CD4-positive, alpha-beta memory T cell (primary cell): ENCODE measurements at regions of chr9 and their contacts with region 1.

Region 1: DNA sequence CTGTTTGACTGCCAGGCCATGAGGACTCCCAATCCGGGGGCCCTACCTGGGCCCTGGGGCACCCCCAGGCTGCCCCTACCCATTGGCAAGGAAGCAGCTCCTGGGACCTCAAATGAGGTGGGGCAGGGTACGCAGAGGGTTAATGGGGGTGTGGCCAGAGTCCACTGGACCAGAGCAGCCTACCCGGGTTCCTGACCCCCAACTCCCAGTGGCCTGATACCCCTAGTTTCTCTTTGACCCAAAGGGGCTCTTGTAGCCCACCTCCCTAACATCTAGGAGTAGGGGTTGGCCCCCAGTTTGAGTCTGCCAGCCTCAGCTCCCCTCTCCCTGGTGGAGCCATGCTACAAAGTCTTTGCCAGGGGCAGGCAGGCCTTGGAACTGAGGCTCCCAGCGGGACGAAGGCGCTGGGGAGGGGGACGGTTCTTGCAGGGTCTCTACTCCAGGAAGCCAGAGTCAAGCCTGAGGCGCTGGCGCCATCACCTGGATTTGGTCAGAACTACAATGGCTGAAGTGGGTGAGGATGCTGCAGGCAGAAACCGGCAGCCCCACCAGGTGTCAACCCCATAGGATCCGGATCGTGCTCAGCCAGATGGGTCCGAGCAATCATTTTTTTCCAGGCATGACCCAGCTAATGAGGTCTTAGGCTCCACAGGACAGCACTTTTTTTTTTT is 8.4 kb upstream of the CERCAM start:
- DNase-seq: peak in 4 of 5 donors; percentile 31 to 42 (median 36)
- H3K4me3 ChIP-seq: no peak overlapping the region
- H3K4me3 Mint-ChIP-seq: no peak overlapping the region
- H3K27ac ChIP-seq: no peak overlapping the region
- H3K27ac Mint-ChIP-seq: no peak overlapping the region
- H3K4me1 ChIP-seq: no peaks in the 10 kb centered on the region
- H3K4me1 Mint-ChIP-seq: peaks cover 0 to 1% (median 0%) of the 10 kb centered on the region in 4 donors
- H3K27me3 ChIP-seq: peaks cover 11% of the 10 kb centered on the region
- H3K27me3 Mint-ChIP-seq: peaks cover 29 to 44% of the 10 kb centered on the region in 2 donors

Region 2: DNA sequence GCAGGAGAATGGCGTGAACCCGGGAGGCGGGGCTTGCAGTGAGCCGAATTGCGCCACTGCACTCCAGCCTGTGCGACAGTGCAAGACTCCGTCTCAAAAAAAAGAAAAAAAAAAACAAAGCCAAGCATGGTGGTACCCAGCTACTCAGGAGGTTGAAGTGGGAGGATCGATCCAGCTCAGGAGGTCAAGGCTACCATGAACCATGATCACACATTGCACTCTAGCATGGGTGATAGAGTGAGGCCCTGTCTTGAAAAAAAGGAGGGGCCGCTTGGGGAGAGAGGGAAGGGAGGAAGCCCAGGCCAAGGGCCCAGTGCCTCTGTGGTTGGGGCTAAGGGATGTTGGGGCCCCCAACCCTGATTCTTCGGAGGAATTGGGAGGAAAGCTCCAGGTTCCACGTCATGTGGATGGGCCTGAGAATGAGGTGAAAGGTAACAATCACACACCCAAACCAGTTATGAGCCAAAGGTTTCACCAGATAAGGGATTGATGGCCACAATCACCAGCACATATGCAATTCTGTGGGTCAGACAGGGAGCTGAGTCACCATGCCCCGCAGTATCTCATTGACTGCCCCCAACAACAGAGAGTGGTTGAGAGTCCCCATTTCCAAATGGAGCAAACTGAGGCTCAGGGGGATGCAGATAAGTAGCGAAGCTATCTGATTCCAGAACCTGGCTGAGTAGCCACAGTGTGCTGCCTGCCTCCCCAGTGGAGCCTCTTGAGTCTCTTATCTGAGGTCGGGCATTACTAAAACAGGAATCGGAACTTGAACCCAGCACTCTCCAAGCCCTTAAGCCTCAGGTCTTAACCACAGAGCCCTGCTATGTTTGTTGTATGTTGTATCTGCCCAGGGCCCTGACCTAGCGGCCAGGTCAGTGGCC is 115.7 kb before region 1 on chr9:
- CTCF ChIA-PET with region 1: interaction called, 3 read pairs
- POLR2A ChIA-PET with region 1: no interaction called
- intact Hi-C with region 1: loop called (anchors 1 kb)
- DNase-seq: no peak
- H3K4me3 ChIP-seq: no peak overlapping the region
- H3K4me3 Mint-ChIP-seq: no peak overlapping the region
- H3K27ac ChIP-seq: no peak overlapping the region
- H3K27ac Mint-ChIP-seq: peak overlapping the region in 2 of 7 donors; percentile 18 to 48
- H3K4me1 ChIP-seq: no peaks in the 10 kb centered on the region
- H3K4me1 Mint-ChIP-seq: peaks cover 2 to 5% (median 4%) of the 10 kb centered on the region in 4 donors
- H3K27me3 ChIP-seq: no peaks in the 10 kb centered on the region
- H3K27me3 Mint-ChIP-seq: no peaks in the 10 kb centered on the region